ENCODE measurements at regions of chr6 and their contacts with region 1.

Region 1: DNA sequence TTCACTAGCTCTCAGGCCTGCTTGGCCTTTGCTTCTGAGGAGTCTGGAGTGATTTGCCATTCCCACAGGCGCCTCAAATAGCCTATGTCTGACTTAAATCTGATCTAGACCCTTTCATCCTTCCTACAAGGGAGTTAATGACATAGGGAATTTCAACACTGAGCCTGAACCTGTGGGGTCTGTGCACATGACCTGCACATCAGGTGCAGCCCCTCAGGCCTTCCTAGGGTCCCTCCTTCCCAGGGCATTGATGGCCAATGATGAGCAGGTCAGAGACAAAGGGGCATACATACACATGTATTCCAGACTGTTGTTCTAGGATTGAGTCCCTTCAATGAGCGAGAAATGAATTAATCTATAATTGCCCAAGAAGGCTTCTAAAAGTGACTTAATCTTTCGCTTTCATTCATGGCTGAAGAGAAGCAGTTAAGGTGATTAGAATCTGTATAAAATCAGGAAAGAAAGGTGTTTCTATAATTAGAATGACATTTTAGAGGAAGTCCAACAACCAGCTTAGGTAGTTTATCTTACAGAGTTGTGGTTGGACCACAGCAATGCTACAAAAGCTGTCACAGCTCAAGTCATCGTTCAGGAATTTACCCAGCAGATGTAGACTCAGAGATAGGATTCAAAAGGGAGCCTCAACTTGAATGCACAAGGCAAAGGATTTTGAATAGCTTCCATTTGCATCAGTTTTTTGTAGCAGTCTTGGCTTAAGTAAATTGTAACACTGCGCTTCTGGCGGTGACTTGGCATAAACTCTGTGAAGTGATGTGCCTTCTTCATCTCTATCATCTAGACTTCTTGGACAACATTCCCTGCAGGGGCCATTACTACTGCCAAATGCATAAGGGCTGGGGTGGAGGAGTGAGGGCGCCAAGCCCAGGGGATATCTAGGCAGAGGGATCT is 27.0 kb upstream of the TBC1D7 start:
- DNase-seq: no peak
- ATAC-seq: peak; percentile 46
- H3K4me3 Mint-ChIP-seq: peak overlapping the region; percentile 70
- H3K27ac Mint-ChIP-seq: peak overlapping the region; percentile 92
- H3K4me1 Mint-ChIP-seq: peaks cover 70% of the 10 kb centered on the region
- H3K27me3 Mint-ChIP-seq: no peaks in the 10 kb centered on the region
- CTCF ChIP-seq: no peak

Region 2: GRCh38 chr6:13302751-13303667 is 52.3 kb before region 1 on chr6:
- CTCF ChIA-PET with region 1: no interaction called
- POLR2A ChIA-PET with region 1: interaction called, 17 read pairs
- intact Hi-C with region 1: loop called (anchors 2 kb)
- DNase-seq: no peak
- ATAC-seq: peak; percentile 55
- H3K4me3 Mint-ChIP-seq: peak overlapping the region; percentile 63
- H3K27ac Mint-ChIP-seq: peak overlapping the region; percentile 92
- H3K4me1 Mint-ChIP-seq: peaks cover 79% of the 10 kb centered on the region
- H3K27me3 Mint-ChIP-seq: no peaks in the 10 kb centered on the region
- CTCF ChIP-seq: no peak

Region 3: GRCh38 chr6:13375360-13375878 is 20.1 kb after region 1 on chr6:
- CTCF ChIA-PET with region 1: interaction called, 3 read pairs
- POLR2A ChIA-PET with region 1: interaction called, 7 read pairs
- intact Hi-C with region 1: loop called (anchors 1 kb)
- DNase-seq: no peak
- ATAC-seq: peak; percentile 77
- H3K4me3 Mint-ChIP-seq: no peak overlapping the region
- H3K27ac Mint-ChIP-seq: peak overlapping the region; percentile 50
- H3K4me1 Mint-ChIP-seq: peaks cover 55% of the 10 kb centered on the region
- H3K27me3 Mint-ChIP-seq: no peaks in the 10 kb centered on the region
- CTCF ChIP-seq: no peak

Region 4: DNA sequence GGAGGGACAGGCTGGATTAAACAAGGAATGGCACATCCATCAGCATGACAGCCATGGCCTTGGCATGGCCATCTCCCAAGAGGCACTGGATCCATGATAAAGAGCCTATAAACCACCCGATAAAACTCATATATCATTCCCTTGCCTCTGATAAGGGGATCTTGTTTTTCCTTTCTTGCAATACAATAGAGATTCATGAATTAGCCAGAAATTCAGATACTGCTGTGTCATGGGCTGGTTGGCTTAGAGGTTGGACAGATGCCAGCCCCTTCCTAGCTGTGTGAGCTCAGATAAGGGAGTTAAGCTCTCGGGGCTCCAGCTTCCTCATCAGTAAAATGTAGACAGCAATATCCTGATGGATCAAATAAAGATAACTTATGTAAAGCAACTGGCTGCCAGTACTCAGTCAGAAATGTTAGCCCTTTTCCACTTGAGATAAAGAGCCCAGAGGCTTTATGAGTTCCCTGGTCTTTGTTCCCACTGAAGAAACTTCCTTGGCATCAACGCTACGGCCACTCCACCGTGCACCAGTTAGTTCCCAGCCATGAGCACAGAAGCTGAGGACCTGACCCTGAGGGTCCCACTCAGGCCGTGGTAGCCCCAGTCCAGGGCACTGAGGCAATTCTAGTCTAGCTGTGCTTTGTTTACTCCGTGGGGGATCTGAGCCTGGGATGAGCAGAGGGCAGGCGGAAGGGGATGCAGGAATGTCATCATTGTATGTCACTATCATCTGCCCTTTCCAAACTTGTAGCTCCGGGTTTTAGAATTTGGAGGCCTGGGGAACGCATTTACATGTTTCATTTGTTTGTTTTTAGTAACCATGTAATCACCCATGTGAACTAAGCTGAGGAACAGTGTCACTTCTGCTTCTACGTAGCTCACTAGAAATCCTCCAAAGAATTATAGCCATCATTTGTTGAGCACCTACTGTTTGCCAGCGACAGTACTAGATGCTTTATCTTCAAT is 40.3 kb after region 1 on chr6:
- CTCF ChIA-PET with region 1: interaction called, 3 read pairs
- POLR2A ChIA-PET with region 1: interaction called, 4 read pairs
- intact Hi-C with region 1: loop called (anchors 1 kb)
- DNase-seq: no peak
- ATAC-seq: peak; percentile 62
- H3K4me3 Mint-ChIP-seq: peak overlapping the region; percentile 47
- H3K27ac Mint-ChIP-seq: peak overlapping the region; percentile 91
- H3K4me1 Mint-ChIP-seq: peaks cover 56% of the 10 kb centered on the region
- H3K27me3 Mint-ChIP-seq: no peaks in the 10 kb centered on the region
- CTCF ChIP-seq: no peak

Region 5: GRCh38 chr6:13427801-13428582 is 72.7 kb after region 1 on chr6:
- CTCF ChIA-PET with region 1: interaction called, 8 read pairs
- POLR2A ChIA-PET with region 1: interaction called, 4 read pairs
- intact Hi-C with region 1: loop called (anchors 1 kb)
- DNase-seq: peak; percentile 58
- ATAC-seq: peak; percentile 86
- H3K4me3 Mint-ChIP-seq: peak overlapping the region; percentile 80
- H3K27ac Mint-ChIP-seq: peak overlapping the region; percentile 95
- H3K4me1 Mint-ChIP-seq: peaks cover 68% of the 10 kb centered on the region
- H3K27me3 Mint-ChIP-seq: no peaks in the 10 kb centered on the region
- CTCF ChIP-seq: no peak

Region 6: DNA sequence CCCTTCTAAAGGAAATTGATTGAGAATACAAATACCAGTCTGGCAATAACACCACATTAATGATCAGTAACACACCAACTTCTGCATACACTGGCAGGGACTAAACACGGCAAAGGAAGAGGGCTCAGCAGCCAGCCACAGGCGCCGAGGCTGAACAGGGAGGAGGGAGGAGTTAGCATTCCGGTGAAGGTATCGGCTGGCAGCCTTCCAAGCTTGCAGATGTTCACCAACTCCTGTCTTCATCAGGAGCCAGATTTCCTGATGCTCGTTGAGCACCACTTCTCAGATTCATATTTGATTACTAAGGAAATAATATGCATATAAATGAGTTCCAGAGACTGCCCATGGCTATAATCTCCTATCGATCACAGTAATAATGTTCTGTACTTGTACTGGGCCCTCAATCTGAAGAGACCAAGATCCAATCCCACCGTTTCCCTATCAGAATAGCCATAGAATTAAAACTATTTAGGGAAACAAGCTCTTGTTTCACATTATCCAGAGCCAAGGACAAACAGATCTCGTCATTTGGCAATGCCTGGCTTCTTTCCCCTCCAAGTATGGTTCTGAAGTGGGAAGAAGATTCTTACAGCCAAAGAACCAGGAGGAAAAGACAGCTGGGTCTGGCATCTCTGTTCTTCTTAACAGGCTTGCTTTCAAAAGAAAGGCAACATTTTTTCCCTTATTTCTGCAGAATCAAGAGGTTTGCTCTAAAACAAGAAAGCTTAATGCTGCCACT is 89.9 kb after region 1 on chr6:
- CTCF ChIA-PET with region 1: no interaction called
- POLR2A ChIA-PET with region 1: no interaction called
- intact Hi-C with region 1: no loop called
- DNase-seq: no peak
- ATAC-seq: no peak
- H3K4me3 Mint-ChIP-seq: no peak overlapping the region
- H3K27ac Mint-ChIP-seq: peak overlapping the region; percentile 13
- H3K4me1 Mint-ChIP-seq: peaks cover 34% of the 10 kb centered on the region
- H3K27me3 Mint-ChIP-seq: no peaks in the 10 kb centered on the region
- CTCF ChIP-seq: no peak

Measured in activated B cell treated with CpG ODN at 0.5 μM for 24 hours (primary cell).